CD4-positive, alpha-beta memory T cell (primary cell): ENCODE measurements at regions of chr15 and their contacts with region 1.

Region 1: DNA sequence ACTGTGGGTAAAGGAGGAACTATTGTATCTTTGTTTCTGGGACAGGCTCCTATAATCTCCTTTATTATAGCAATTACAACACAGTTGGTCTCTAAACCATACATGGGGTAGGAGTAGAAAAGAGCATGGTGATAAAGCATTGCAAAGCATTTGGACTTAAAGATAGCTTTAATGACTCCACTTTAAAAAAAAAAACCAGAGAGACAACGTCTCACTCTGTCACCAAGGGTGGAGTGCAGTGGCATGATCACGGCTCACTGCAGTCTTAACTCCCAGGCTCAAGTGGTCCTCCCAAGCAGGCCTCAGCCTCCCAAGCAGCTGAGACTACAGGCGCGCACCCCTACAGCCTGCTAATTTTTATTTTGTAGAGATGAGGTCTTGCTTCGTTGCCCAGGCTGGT is 68.2 kb downstream of the DENND4A start:
- DNase-seq: no peak
- H3K4me3 ChIP-seq: no peak overlapping the region
- H3K4me3 Mint-ChIP-seq: no peak overlapping the region
- H3K27ac ChIP-seq: no peak overlapping the region
- H3K27ac Mint-ChIP-seq: no peak overlapping the region
- H3K4me1 ChIP-seq: no peaks in the 10 kb centered on the region
- H3K4me1 Mint-ChIP-seq: peaks cover 0 to 5% (median 0%) of the 10 kb centered on the region in 4 donors
- H3K27me3 ChIP-seq: no peaks in the 10 kb centered on the region
- H3K27me3 Mint-ChIP-seq: no peaks in the 10 kb centered on the region

Region 2: DNA sequence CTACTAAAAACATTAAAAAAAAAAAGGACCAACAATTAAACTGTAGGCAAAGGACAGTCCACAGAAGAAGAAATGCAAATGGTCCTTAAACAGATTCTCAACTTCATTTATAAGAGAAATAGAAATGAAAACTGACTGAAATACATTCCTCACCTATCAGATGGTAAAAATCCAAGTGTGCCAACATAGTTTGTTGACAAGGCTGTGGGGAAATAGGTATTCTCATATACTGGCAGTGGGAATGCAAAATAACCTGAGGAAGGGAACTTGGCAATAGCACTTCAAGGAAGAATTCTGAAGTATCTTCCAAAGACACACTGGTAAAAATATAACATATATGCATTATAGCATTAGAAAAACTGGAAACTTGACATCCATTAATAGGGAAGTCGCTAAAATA is 48.3 kb before region 1 on chr15:
- CTCF ChIA-PET with region 1: no interaction called
- POLR2A ChIA-PET with region 1: no interaction called
- intact Hi-C with region 1: loop called (anchors 10 kb)
- DNase-seq: no peak
- H3K4me3 ChIP-seq: no peak overlapping the region
- H3K4me3 Mint-ChIP-seq: no peak overlapping the region
- H3K27ac ChIP-seq: no peak overlapping the region
- H3K27ac Mint-ChIP-seq: peak overlapping the region in 4 of 7 donors; percentile 7 to 70 (median 40)
- H3K4me1 ChIP-seq: no peaks in the 10 kb centered on the region
- H3K4me1 Mint-ChIP-seq: peaks cover 0 to 4% (median under 1%) of the 10 kb centered on the region in 4 donors
- H3K27me3 ChIP-seq: no peaks in the 10 kb centered on the region
- H3K27me3 Mint-ChIP-seq: no peaks in the 10 kb centered on the region

Region 3: GRCh38 chr15:65712415-65712814 is 11.5 kb before region 1 on chr15:
- CTCF ChIA-PET with region 1: no interaction called
- POLR2A ChIA-PET with region 1: no interaction called
- intact Hi-C with region 1: loop called (anchors 2 kb)
- DNase-seq: no peak
- H3K4me3 ChIP-seq: no peak overlapping the region
- H3K4me3 Mint-ChIP-seq: no peak overlapping the region
- H3K27ac ChIP-seq: no peak overlapping the region
- H3K27ac Mint-ChIP-seq: no peak overlapping the region
- H3K4me1 ChIP-seq: no peaks in the 10 kb centered on the region
- H3K4me1 Mint-ChIP-seq: peaks cover 0 to 5% (median 0%) of the 10 kb centered on the region in 4 donors
- H3K27me3 ChIP-seq: no peaks in the 10 kb centered on the region
- H3K27me3 Mint-ChIP-seq: no peaks in the 10 kb centered on the region

Region 4: DNA sequence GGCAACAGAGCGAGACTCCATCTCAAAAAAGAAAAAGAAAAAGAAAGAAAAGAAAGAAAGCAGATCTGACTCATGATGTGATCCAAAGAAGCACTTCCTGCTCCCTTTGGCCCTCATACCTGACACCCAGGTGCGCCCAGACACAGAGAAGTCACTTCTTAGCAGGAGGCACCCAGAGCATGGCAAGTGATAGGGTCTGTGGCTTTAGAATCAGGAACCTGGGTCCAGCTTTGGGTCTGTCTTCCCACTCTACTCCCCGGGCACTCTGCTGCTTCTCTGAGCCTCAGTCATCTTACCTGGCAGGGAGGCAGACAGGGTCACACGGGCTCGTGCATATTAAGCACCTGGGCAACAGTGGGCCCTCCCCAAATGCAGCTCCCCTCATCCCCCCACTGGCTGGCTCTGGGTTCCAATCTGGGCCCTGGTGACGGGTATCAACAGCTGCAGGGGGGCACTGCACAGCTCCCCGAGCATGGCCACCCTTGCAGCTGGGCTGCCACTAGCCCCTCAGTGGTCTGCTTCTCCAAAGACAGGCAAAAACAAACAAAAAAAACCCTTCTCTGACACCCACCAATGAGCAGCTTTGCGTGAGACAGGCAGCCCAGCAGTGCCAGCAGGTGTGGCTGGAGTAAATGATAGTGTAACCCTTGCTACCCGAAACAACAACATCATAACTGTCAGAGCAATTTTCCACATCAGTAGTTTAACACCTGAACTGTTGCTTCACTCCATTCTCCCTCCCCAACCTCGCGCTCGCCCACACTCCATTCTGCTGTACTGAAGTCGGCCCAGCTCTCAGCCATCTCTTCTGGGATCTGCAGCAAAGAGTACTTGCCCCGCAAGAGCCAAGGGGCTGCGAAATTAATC is 429.9 kb after region 1 on chr15:
- CTCF ChIA-PET with region 1: no interaction called
- POLR2A ChIA-PET with region 1: no interaction called
- intact Hi-C with region 1: no loop called
- DNase-seq: no peak
- H3K4me3 ChIP-seq: no peak overlapping the region
- H3K4me3 Mint-ChIP-seq: no peak overlapping the region
- H3K27ac ChIP-seq: no peak overlapping the region
- H3K27ac Mint-ChIP-seq: no peak overlapping the region
- H3K4me1 ChIP-seq: no peaks in the 10 kb centered on the region
- H3K4me1 Mint-ChIP-seq: no peaks in the 10 kb centered on the region
- H3K27me3 ChIP-seq: no peaks in the 10 kb centered on the region
- H3K27me3 Mint-ChIP-seq: peaks cover 9 to 18% of the 10 kb centered on the region in 2 donors